HEK293 (cell line): ENCODE measurements at regions of chr12 and their contacts with region 1.

Region 1: DNA sequence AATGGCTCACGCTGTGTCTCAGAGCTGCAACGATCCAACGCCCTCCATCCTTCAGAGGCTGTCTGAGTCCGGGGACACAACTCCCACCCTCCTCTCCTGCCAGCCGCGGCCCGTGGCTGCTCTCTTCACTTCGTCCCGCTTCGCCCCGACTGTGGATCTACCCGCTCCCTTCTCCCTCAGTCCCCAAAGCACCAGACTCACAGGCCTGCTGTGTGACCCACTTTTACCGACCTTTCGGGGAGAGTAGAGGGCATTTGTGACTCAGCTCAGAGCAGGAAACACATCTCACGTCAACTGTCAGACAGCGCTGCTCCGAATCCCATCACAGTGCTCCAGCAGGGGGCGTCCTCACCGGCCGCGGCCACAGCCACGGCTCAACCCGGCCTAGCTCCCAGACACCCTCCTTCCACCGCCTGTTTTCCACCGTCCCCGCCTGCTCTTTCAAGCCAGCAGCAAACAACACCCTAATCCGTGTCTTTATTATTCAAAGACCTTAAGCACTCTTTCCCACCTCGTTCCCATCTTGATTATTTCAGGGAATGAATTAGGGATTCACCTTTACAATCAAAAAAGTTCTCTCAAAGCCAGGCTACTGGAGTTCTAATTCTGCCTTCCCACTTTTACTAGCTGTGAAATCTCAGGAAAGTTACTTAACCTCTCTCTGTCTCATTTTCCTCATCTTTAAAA is 5.0 kb upstream of the AQP2 start:
- H3K4me3 ChIP-seq: peak overlapping the region; percentile 14; the same call in 1 of the 2 replicates
- H3K27ac ChIP-seq: no peak overlapping the region
- H3K4me1 ChIP-seq: no peaks in the 10 kb centered on the region
- CTCF ChIP-seq: peak; percentile 98

Region 2: GRCh38 chr12:49750027-49750995 is 195.2 kb before region 1 on chr12:
- CTCF ChIA-PET with region 1: no interaction called
- POLR2A ChIA-PET with region 1: no interaction called
- H3K4me3 ChIP-seq: no peak overlapping the region
- H3K27ac ChIP-seq: peak overlapping the region; percentile 67
- H3K4me1 ChIP-seq: peaks cover 31% of the 10 kb centered on the region
- CTCF ChIP-seq: no peak

Region 3: DNA sequence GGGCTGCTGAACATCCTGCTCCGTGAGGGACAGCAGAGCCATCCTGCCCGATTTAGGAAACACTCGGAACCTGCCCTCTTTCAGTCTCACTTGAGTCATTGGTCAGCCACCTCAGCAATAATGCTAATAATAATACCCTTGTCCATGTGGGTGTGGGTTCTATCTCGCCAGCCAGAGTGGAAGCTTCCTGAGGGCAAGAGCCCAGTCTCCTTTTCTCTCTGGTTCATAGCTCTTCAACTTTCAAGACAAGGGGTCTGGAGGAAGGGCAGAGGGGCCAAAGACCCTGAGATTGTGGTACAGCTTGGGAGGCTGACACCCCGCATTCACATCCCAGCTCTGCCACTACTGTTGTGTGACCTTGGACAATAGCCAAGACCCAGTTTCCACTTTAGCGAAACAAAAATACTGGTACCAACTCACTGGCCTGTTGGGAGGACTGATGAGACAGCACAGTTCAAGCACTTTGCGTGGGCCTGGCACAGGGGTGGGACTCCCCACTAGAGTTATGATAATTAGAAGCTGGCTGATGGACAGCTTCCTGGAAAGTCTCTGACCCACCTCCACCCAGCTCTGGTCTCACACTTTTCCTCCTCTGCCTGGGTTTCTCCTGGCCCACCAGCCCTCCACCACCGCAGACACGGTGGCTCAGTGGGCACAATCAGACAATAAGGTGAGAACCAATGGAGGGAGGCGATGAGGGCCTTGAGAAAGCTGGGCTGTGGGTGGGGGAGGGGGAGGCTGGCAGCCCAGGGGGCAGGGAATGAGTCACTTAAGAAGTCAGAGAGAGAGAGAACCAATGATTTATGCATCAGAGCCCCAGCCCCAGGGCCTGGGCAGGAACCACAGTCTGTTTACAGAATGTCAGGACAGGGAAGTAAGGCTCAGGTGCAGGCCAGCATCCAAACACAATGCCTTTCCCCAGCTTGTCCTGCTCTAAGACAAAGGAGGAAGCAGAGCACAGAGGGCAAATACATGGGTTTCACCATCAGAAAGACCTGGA is 51.5 kb before region 1 on chr12:
- CTCF ChIA-PET with region 1: interaction called, 12 read pairs
- POLR2A ChIA-PET with region 1: no interaction called
- H3K4me3 ChIP-seq: no peak overlapping the region
- H3K27ac ChIP-seq: no peak overlapping the region
- H3K4me1 ChIP-seq: no peaks in the 10 kb centered on the region
- CTCF ChIP-seq: no peak

Region 4: GRCh38 chr12:49930515-49931288 is 14.8 kb before region 1 on chr12:
- CTCF ChIA-PET with region 1: interaction called, 29 read pairs
- POLR2A ChIA-PET with region 1: no interaction called
- H3K4me3 ChIP-seq: no peak overlapping the region
- H3K27ac ChIP-seq: no peak overlapping the region
- H3K4me1 ChIP-seq: no peaks in the 10 kb centered on the region
- CTCF ChIP-seq: no peak

Region 5: DNA sequence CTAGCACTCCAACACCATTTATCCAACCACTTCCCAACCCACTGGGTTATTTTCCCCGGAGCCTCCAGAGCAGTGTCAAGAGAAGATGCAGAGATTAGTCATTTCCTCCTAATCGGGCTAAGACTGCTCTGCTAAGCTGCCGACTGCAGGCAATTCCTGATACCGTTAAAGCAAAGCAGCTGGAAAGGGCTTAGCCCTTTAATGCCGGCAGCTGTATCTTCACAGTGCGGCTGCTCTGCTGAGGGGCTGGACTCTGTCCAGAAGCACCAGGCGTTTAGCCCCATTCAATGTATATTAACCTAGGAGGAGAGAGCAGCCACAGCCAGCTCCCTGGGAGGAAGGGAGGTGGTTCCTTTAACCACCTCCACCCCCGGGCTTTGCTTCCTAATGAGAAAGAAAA is 38.4 kb after region 1 on chr12:
- CTCF ChIA-PET with region 1: interaction called, 13 read pairs
- POLR2A ChIA-PET with region 1: interaction called, 3 read pairs
- H3K4me3 ChIP-seq: no peak overlapping the region
- H3K27ac ChIP-seq: no peak overlapping the region
- H3K4me1 ChIP-seq: no peaks in the 10 kb centered on the region
- CTCF ChIP-seq: no peak

Region 6: DNA sequence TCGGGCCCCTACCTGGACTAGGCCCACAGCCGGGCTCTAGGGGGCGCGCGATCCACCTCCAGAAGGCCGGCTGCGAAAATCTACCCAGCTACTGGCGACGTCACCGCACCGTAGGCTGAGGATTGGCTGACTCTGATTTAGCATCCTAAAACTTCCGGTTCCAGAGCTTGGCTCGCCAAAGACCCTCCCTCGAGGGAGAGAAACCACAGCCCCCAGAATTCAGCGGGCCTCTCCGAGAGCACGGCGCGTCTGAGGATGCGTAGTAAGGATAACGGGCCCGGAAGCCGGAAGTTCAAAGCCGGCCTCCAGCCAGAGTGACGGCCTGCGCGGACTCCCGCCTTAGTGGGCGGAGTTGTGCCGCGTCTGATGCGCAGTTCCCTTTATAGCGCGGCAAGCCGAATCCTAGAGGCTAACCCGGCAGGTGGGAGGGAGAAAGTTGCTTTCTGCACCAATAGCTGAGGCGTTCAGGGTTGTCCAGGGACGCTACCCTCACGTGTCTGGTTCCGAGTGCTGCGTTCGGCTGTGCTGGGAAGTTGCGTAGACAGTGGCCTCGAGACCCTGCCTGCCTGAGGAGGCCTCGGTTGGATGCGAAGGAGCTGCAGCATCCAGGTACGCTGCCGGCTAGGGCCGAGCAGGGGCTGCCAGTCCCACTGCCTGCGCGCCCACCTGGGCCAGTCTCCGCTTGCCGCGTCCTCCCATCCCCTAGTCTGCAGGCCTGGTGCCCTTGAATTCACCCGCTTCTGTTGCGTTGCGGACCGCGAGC is 166.3 kb after region 1 on chr12 and contains the start of gene COX14:
- CTCF ChIA-PET with region 1: no interaction called
- POLR2A ChIA-PET with region 1: no interaction called
- H3K4me3 ChIP-seq: peak within 1 kb of the TSS; percentile 75
- H3K27ac ChIP-seq: peak within 1 kb of the TSS; percentile 65
- H3K4me1 ChIP-seq: peaks cover 6% of the 10 kb centered on the region; the same call in 1 of the 2 replicates
- CTCF ChIP-seq: peak; percentile 96; the same call in 1 of the 2 replicates

Region 7: GRCh38 chr12:50569321-50569720 is 623.8 kb after region 1 on chr12:
- CTCF ChIA-PET with region 1: no interaction called
- POLR2A ChIA-PET with region 1: no interaction called
- H3K4me3 ChIP-seq: no peak overlapping the region
- H3K27ac ChIP-seq: no peak overlapping the region
- H3K4me1 ChIP-seq: peaks cover 15% of the 10 kb centered on the region
- CTCF ChIP-seq: no peak